GM12878 (cell line): ENCODE measurements at regions of chr15 and their contacts with region 1.

Region 1: DNA sequence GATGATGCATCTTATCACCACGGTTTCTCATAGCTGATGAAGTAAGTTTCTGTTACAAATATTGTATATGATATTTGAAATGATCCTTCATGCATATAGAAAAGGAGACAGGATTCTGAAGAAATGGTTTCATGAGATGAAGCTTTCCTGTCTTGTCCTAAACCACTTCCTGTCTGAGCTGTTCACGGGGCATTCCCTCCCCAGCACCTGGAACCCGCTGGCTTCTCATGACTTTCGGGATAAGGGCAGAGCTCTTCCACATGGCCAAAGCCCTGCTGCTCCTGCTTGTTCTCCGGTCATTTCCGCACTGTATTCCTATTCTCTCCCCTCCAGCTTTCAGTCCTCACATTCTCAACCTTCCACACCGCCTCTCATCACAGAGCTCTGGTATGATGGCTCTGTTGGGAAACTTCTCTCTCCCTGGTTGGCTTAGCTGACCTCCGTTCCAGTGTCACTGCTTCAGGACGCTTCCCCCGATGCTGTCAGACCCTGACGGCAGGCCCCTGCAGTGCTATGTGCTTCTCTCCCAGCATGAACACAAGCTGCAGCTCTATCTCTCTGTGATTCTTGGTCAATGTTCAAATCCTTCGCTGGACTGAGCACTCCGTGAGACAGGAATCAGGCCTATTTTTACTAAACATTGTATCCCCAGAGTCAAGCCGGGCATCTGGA is 86.9 kb upstream of the HERC1 start:
- DNase-seq: no peak
- ATAC-seq: no peak
- H3K4me3 ChIP-seq: no peak overlapping the region
- H3K27ac ChIP-seq: no peak overlapping the region
- H3K4me1 ChIP-seq: peaks cover 27% of the 10 kb centered on the region
- H3K27me3 ChIP-seq: no peaks in the 10 kb centered on the region
- CTCF ChIP-seq: no peak
- EP300 ChIP-seq: no peak
- POLR2A ChIP-seq: no peak
- RAD21 ChIP-seq: no peak

Region 2: DNA sequence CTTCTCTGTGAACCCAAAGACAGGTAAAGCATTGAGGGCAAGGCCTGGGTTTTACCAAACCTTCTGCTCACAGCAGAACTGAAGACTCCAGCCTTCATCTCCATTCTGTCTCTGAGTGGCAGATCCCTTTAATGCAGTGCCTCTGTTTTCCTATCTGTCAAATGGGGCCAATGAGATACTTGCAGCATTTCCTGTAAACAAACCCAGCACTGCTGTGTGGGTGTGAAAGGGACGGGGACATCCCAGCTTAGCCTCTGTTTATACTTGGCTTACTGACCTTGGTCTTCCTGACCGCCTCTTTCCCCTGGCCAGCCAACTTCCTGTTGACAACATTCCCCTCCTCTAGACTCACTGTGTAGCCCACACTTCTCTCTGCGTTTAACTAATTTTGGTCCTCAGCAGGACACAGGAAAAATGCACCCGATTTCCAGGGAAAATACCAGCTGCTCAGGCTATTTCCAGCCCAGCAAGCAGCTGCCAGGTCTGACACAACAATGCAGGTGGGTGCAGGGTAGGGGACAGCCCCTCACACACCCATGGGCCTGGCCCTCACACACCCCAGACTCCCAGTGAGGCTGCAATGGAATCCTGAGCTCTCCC is 19.0 kb after region 1 on chr15:
- CTCF ChIA-PET with region 1: interaction called, 30 read pairs
- POLR2A ChIA-PET with region 1: interaction called, 4 read pairs
- RAD21 ChIA-PET with region 1: interaction called, 3 read pairs
- SMC1A ChIA-PET with region 1: interaction called, 11 read pairs
- in situ Hi-C with region 1: no loop called
- intact Hi-C with region 1: no loop called
- DNase-seq: peak; percentile 15
- ATAC-seq: peak; percentile 69
- H3K4me3 ChIP-seq: no peak overlapping the region
- H3K27ac ChIP-seq: 0 out of 2 replicates have a peak overlapping the region, but pooled peaks have one; percentile 20
- H3K4me1 ChIP-seq: peaks cover 22% of the 10 kb centered on the region
- H3K27me3 ChIP-seq: no peaks in the 10 kb centered on the region
- CTCF ChIP-seq: no peak
- EP300 ChIP-seq: no peak
- POLR2A ChIP-seq: no peak
- RAD21 ChIP-seq: no peak

Region 3: DNA sequence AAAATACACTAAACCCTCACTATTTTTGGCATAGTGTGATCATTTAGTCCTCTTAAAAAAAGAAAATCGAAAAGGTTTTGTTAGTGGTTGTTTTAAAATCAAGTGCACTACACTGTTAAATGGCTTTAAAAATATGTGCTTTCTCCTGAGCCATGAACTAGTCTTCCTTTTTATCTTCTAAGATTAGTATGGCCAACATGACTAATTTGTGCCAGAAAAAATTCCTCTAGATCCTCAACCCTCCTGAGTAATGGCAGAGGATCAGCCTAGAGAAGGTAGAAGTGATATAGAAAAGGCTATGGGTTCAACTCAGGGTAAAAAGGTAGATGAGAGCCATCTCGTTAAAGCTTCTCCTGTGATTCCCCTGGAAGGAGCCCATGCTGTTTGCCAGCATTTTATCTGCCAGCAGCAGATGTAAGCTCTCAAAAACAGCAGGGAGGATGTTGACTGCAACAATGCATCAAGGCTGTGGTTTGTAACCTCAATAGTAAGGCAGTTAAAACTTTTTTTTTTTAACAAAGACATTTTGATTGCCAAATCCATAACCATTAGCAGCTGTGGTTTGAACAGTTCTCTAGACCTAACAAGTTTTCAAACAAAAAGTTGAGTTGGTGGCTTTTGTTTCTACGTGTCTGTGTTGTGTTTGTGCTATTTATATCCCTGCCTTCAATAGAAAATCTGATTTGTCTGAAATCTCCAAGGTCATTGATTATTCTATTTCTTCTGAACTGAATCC is 509.5 kb after region 1 on chr15:
- CTCF ChIA-PET with region 1: no interaction called
- POLR2A ChIA-PET with region 1: no interaction called
- RAD21 ChIA-PET with region 1: no interaction called
- SMC1A ChIA-PET with region 1: no interaction called
- in situ Hi-C with region 1: no loop called
- intact Hi-C with region 1: no loop called
- DNase-seq: peak; percentile 65
- ATAC-seq: peak; percentile 87
- H3K4me3 ChIP-seq: 0 out of 2 replicates have a peak overlapping the region, but pooled peaks have one; percentile 6
- H3K27ac ChIP-seq: peak overlapping the region; percentile 87
- H3K4me1 ChIP-seq: peaks cover 19% of the 10 kb centered on the region
- H3K27me3 ChIP-seq: no peaks in the 10 kb centered on the region
- CTCF ChIP-seq: no peak
- EP300 ChIP-seq: peak in 1 of 2 experiments; percentile 55; a peak in 2 of 4 replicates
- POLR2A ChIP-seq: no peak
- RAD21 ChIP-seq: no peak